Left colon (tissue), 2 donors: ENCODE measurements at regions of chr9 and their contacts with region 1.

Region 1: GRCh38 chr9:109903515-109904138 is 123.6 kb downstream of the PALM2AKAP2 start:
- DNase-seq: peak; percentile 57 to 71
- ATAC-seq: peak; percentile 58

Region 2: GRCh38 chr9:110047955-110048402 is 144.4 kb after region 1 on chr9:
- intact Hi-C with region 1: no loop called
- DNase-seq: peak; percentile 30 to 37
- ATAC-seq: peak; percentile 12

Region 3: GRCh38 chr9:110058304-110058953 is 154.8 kb after region 1 on chr9:
- intact Hi-C with region 1: loop called in 1 of 2 experiments (anchors 2 kb)
- DNase-seq: peak; percentile 41 to 67
- ATAC-seq: peak; percentile 99

Region 4: GRCh38 chr9:110152704-110153374 is 249.2 kb after region 1 on chr9:
- intact Hi-C with region 1: loop called (anchors 5 to 10 kb)
- DNase-seq: no peak
- ATAC-seq: peak; percentile 73